ENCODE measurements at regions of chr11 and their contacts with region 1.

Region 1: GRCh38 chr11:44727373-44728287 is 868 bp downstream of the TSPAN18 start:
- DNase-seq: peak; percentile 65
- ATAC-seq: peak; percentile 89
- H3K4me3 ChIP-seq: peak overlapping the region; percentile 45
- H3K27ac ChIP-seq: no peak overlapping the region
- H3K4me1 ChIP-seq: no peaks in the 10 kb centered on the region; the same call in 1 of the 2 replicates
- H3K27me3 ChIP-seq: peaks cover 51% of the 10 kb centered on the region
- CTCF ChIP-seq: peak; percentile 87
- POLR2A ChIP-seq: no peak
- RAD21 ChIP-seq: peak; percentile 87

Region 2: DNA sequence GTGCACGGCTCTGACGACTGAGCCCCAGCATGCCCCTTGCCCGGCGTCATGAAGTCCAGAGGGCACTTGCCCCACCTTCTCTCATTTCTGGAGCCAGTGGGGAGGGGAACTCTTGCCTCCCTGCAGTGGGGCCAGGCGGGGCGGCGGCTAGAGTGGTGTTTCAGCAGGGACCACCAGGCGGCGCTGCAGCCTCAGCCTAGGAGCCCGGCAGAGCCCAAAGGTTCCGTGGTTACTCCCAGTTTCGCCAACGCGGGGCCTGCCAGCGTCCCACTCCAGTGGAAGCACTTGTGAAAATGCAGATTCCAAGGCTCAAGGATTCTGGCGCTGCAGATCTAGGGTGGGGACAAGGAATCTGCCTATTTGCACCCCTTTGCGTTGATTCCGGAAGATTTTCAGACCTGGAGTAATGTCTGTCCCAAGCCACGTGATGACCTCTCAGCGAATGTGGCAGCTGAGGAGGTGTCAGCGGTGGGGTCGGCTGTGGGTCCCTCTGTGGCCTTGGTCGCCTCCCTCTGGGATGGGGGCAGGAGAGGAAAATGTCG is 106.4 kb before region 1 on chr11:
- CTCF ChIA-PET with region 1: interaction called, 5 read pairs
- POLR2A ChIA-PET with region 1: no interaction called
- dilution Hi-C with region 1: no loop called
- in situ Hi-C with region 1: no loop called
- intact Hi-C with region 1: loop called (anchors 1 kb)
- DNase-seq: peak; percentile 41
- ATAC-seq: peak; percentile 88
- H3K4me3 ChIP-seq: no peak overlapping the region
- H3K27ac ChIP-seq: no peak overlapping the region
- H3K4me1 ChIP-seq: no peaks in the 10 kb centered on the region; the same call in 1 of the 2 replicates
- H3K27me3 ChIP-seq: no peaks in the 10 kb centered on the region
- CTCF ChIP-seq: peak; percentile 90
- POLR2A ChIP-seq: no peak
- RAD21 ChIP-seq: peak; percentile 97

Region 3: DNA sequence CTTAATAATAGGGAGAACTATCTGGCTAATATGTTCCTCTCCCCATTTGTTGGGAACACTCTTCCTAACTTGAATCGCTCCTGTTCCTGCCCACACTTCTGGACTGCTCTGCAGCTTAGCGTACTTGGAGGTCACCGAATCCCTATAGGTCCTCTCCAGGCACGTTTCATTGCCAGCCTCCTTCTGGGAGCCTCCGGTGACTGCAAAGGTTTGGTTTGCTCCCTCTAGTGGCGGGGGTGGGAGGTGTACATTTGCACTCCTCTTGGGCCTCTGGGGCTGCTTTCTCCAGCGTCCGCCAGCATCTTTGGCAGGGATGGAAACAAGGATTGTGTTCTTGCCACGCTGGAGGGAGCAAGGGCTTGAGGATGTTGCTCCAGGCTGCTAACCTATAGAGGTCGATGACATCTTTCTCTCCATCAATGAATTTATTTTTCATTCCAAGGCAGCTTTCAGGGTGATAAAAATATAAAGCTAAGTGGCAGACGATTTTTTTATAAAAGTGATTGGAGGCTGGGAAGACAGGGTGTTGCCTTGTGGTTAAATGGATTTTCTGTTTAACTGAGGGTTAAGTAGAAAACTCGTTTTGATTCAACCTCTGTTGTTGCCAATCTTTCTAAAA is 47.8 kb after region 1 on chr11:
- CTCF ChIA-PET with region 1: no interaction called
- POLR2A ChIA-PET with region 1: no interaction called
- dilution Hi-C with region 1: no loop called
- in situ Hi-C with region 1: loop called (anchors 5 kb)
- intact Hi-C with region 1: loop called (anchors 1 kb)
- DNase-seq: peak; percentile 28
- ATAC-seq: no peak
- H3K4me3 ChIP-seq: no peak overlapping the region
- H3K27ac ChIP-seq: no peak overlapping the region
- H3K4me1 ChIP-seq: peaks cover 4% of the 10 kb centered on the region; the same call in 1 of the 2 replicates
- H3K27me3 ChIP-seq: peaks cover 12% of the 10 kb centered on the region; the same call in 1 of the 2 replicates
- CTCF ChIP-seq: peak; percentile 58
- POLR2A ChIP-seq: no peak
- RAD21 ChIP-seq: peak; percentile 56

Region 4: DNA sequence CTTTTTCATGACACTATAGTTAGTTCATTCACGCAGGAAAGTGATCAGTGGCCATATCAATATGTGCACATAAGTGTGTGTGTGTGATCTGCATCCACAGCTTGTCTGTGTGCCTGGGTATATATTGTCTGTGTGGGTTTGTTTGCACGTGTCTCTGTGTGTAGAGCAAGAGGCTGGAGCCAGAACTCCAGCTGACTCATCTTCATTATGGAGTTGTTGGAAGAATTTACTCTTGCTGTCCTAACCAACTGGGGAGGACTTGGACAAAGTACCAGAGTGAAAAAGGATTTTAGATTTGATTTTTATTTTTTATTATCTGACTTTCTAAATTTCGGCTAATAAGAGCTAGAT is 159.1 kb after region 1 on chr11:
- CTCF ChIA-PET with region 1: no interaction called
- POLR2A ChIA-PET with region 1: no interaction called
- dilution Hi-C with region 1: no loop called
- in situ Hi-C with region 1: loop called (anchors 5 kb)
- intact Hi-C with region 1: loop called (anchors 2 kb)
- DNase-seq: peak; percentile 86
- ATAC-seq: peak; percentile 91
- H3K4me3 ChIP-seq: no peak overlapping the region
- H3K27ac ChIP-seq: peak overlapping the region; percentile 11; the same call in 1 of the 2 replicates
- H3K4me1 ChIP-seq: peaks cover 11% of the 10 kb centered on the region
- H3K27me3 ChIP-seq: peaks cover 18% of the 10 kb centered on the region
- CTCF ChIP-seq: no peak
- POLR2A ChIP-seq: no peak
- RAD21 ChIP-seq: no peak

Region 5: GRCh38 chr11:44911029-44911814 is 183.6 kb after region 1 on chr11:
- CTCF ChIA-PET with region 1: interaction called, 5 read pairs
- POLR2A ChIA-PET with region 1: no interaction called
- dilution Hi-C with region 1: no loop called
- in situ Hi-C with region 1: no loop called
- intact Hi-C with region 1: loop called (anchors 5 kb)
- DNase-seq: peak; percentile 75
- ATAC-seq: peak; percentile 94
- H3K4me3 ChIP-seq: no peak overlapping the region
- H3K27ac ChIP-seq: no peak overlapping the region
- H3K4me1 ChIP-seq: peaks cover 1% of the 10 kb centered on the region; the same call in 1 of the 2 replicates
- H3K27me3 ChIP-seq: peaks cover 7% of the 10 kb centered on the region; the same call in 1 of the 2 replicates
- CTCF ChIP-seq: peak; percentile 77
- POLR2A ChIP-seq: no peak
- RAD21 ChIP-seq: peak; percentile 71